Body of pancreas (tissue), 4 donors: ENCODE measurements at regions of chr11 and their contacts with region 1.

Region 1: GRCh38 chr11:6481012-6481923 is at the starts of genes ARFIP2 and TIMM10B:
- DNase-seq: peak; percentile 98 to 99 (median 99)
- ATAC-seq: peak; percentile 98
- H3K4me3 ChIP-seq: peak within 1 kb of the TSS; percentile 47 to 50
- H3K27ac ChIP-seq: peak within 1 kb of the TSS; percentile 91 to 95 (median 94)
- H3K4me1 ChIP-seq: peaks cover 47% of the 10 kb centered on the region
- H3K27me3 ChIP-seq: no peaks in the 10 kb centered on the region
- CTCF ChIP-seq: peak in 2 of 7 experiments; percentile 2 to 10
- POLR2A ChIP-seq: peak; percentile 84 to 94 (median 94)
- total RNA-seq, gene ARFIP2: 47.2 to 82.7 TPM
- total RNA-seq, gene TIMM10B: 17.1 to 22.3 TPM

Region 2: DNA sequence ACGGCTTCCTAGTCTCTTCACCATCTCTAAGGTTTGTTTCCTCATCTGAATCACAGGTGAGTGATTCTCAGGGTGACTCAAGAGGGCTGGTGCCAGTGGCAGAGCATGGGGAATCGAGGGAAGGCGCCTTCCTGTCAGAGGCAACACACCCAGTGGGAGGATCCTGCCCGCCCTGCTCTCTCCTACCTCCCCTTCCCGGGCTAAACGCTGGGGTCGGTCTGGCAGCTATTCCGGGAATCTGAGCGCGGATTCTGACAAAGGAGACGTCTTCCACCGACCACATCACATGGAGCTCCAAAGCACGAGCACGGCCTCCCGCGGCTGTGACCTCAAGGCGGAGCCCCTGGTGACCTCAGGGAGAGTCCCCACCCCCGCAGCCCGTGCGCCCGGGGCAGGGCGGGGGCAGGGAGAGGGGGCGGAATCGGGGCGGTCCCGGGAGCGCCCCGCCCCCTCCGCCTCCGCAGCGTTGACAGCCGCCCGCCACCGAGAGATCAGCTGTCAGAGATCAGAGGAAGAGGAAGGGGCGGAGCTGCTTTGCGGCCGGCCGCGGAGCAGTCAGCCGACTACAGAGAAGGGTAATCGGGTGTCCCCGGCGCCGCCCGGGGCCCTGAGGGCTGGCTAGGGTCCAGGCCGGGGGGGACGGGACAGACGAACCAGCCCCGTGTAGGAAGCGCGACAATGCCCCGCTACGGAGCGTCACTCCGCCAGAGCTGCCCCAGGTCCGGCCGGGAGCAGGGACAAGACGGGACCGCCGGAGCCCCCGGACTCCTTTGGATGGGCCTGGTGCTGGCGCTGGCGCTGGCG is 91.1 kb before region 1 on chr11 and contains the start of gene SMPD1:
- intact Hi-C with region 1: loop called (anchors 10 kb)
- DNase-seq: peak; percentile 94 to 96 (median 95)
- ATAC-seq: peak; percentile 95
- H3K4me3 ChIP-seq: peak within 1 kb of the TSS; percentile 66 to 77
- H3K27ac ChIP-seq: peak within 1 kb of the TSS; percentile 93 to 97 (median 94)
- H3K4me1 ChIP-seq: peaks cover 41% of the 10 kb centered on the region
- H3K27me3 ChIP-seq: no peaks in the 10 kb centered on the region
- CTCF ChIP-seq: peak in 1 of 7 experiments; percentile 11
- POLR2A ChIP-seq: peak; percentile 54 to 88 (median 80)
- total RNA-seq, gene SMPD1: 17.1 to 29.7 TPM

Region 3: GRCh38 chr11:6404342-6405051 is 76.8 kb before region 1 on chr11:
- intact Hi-C with region 1: no loop called
- DNase-seq: no peak
- ATAC-seq: peak; percentile 30
- H3K4me3 ChIP-seq: no peak overlapping the region
- H3K27ac ChIP-seq: peak overlapping the region in 1 of 4 donors; percentile 46
- H3K4me1 ChIP-seq: no peaks in the 10 kb centered on the region
- H3K27me3 ChIP-seq: no peaks in the 10 kb centered on the region
- CTCF ChIP-seq: no peak
- POLR2A ChIP-seq: no peak

Region 4: GRCh38 chr11:6603287-6604080 is 122.2 kb after region 1 on chr11 and contains the starts of genes ILK and RRP8:
- intact Hi-C with region 1: loop called (anchors 10 kb)
- DNase-seq: peak; percentile 92 to 95 (median 92)
- ATAC-seq: peak; percentile 93
- H3K4me3 ChIP-seq: peak within 1 kb of the TSS; percentile 50 to 73
- H3K27ac ChIP-seq: peak within 1 kb of the TSS; percentile 91 to 97 (median 96)
- H3K4me1 ChIP-seq: peaks cover 52% of the 10 kb centered on the region
- H3K27me3 ChIP-seq: no peaks in the 10 kb centered on the region
- CTCF ChIP-seq: peak in 5 of 7 experiments; percentile 20 to 64 (median 45)
- POLR2A ChIP-seq: peak; percentile 70 to 76 (median 71)
- total RNA-seq, gene ILK: 82.8 to 137 TPM
- total RNA-seq, gene RRP8: 5.4 to 8.9 TPM